ENCODE measurements at regions of chr2 and their contacts with region 1.

Region 1: GRCh38 chr2:164841719-164842623 is at the start of gene COBLL1:
- DNase-seq: peak in 11 of 35 experiments; percentile 0 to 28 (median 7)
- ATAC-seq: peak; percentile 25 to 61 (median 52)
- H3K4me3 ChIP-seq: peak within 1 kb of the TSS; percentile 41 to 92
- H3K4me3 Mint-ChIP-seq: peak within 1 kb of the TSS; percentile 61 to 75 (median 71)
- H3K27ac ChIP-seq: no peak within 1 kb of the TSS
- H3K27ac Mint-ChIP-seq: no peak within 1 kb of the TSS
- H3K4me1 ChIP-seq: peaks cover 3 to 13% of the 10 kb centered on the region in 2 experiments
- H3K4me1 Mint-ChIP-seq: peaks cover 6 to 11% (median 9%) of the 10 kb centered on the region in 3 donors
- H3K27me3 ChIP-seq: peaks cover 0 to 20% of the 10 kb centered on the region in 2 experiments
- H3K27me3 Mint-ChIP-seq: peaks cover 37% of the 10 kb centered on the region in 2 donors
- total RNA-seq, gene COBLL1: 0.68 to 5.1 (median 1.9) TPM

Region 2: DNA sequence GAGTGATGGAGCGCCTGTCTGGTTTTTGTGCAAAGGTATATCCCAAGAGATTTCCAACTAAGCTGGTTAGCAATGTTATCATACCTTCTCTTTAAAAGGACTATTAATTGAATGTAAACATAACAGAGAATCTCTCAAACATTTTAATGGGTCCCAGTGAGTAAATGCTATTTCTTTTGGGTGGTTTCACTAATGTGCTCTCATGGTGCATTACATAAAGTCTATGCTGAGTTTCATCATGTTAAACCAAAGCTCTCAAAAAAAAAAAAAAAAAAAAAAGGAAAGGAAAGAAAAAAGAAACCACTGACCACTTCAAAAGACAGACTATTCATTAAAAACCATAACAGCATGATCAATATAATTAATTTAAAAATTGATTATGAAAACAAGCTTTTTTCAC is 1404.9 kb after region 1 on chr2:
- CTCF ChIA-PET with region 1: no interaction called
- POLR2A ChIA-PET with region 1: interaction called in 1 of 2 experiments, 10 read pairs
- DNase-seq: no peak
- ATAC-seq: no peak
- H3K4me3 ChIP-seq: no peak overlapping the region
- H3K4me3 Mint-ChIP-seq: no peak overlapping the region
- H3K27ac ChIP-seq: no peak overlapping the region
- H3K27ac Mint-ChIP-seq: no peak overlapping the region
- H3K4me1 ChIP-seq: no peaks in the 10 kb centered on the region
- H3K4me1 Mint-ChIP-seq: no peaks in the 10 kb centered on the region
- H3K27me3 ChIP-seq: no peaks in the 10 kb centered on the region
- H3K27me3 Mint-ChIP-seq: no peaks in the 10 kb centered on the region

Measured in T-cell (primary cell).